Right ventricle myocardium superior (tissue), 1 donor: ENCODE measurements at regions of chr6 and their contacts with region 1.

Region 1: DNA sequence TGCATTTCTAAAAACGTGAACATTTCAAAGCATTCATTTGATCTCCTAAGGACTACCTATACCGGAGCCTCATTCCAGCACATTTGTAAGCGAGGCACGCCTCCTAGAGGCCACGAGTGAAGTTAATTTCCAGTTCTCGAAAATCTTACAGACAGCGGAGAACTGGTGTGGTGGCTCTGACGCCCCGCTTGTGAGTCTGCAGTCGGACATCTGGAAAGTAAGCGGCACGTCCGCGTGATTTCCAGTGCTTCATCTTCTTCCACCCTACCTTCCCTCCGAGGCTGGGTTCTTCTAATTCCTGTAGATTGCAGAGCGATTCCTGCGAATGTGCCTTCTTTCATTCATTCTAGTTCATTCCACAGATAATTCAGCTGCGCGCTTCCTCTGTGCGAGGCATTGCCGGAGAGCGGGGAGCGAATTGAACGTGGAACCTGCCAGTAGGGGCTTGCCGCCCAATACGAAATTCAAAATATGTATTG is 810 bp upstream of the PRIM2 start:
- DNase-seq: peak; percentile 82
- ATAC-seq: peak; percentile 98

Region 2: DNA sequence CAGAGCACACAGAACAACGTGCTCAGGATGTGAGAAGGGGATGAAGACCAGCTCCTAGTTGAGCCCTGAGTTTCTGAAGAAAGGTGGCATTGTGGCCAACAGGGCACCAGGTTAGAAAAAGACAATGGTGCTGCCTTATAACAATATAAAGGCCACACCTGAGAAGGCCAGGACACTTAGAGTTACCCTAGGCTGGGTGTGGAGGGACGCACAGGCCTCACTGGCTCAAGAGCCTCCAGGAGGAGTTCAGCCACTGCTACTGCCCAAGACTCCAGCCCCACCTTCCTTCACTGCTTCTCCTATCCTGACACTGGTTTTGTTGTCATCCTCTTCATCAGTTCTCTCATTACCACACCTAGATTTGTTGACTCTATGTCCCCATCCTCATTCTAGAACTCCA is 416.9 kb before region 1 on chr6:
- intact Hi-C with region 1: loop called (anchors 2 kb)
- DNase-seq: no peak
- ATAC-seq: no peak

Region 3: DNA sequence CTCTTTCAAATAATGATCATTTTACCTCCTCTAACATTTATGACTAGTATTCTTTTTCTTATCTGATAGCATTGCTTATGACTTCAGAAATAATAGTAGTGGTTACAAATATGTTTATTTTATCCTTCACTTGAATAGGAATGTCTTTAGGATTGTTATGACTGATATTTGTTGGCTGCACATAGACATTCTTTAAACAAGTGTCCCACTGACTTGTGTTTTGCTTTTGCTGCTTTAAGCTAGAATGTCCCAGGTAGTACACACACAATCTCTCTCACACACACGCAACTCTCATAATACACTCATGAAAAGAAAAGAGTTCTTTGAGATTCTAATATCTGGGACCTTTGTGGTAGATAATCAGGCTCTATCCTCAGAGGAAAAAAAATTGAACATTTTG is 248.6 kb before region 1 on chr6:
- intact Hi-C with region 1: no loop called
- DNase-seq: no peak
- ATAC-seq: no peak

Region 4: GRCh38 chr6:57158658-57159057 is 158.0 kb before region 1 on chr6:
- intact Hi-C with region 1: no loop called
- DNase-seq: no peak
- ATAC-seq: no peak

Region 5: DNA sequence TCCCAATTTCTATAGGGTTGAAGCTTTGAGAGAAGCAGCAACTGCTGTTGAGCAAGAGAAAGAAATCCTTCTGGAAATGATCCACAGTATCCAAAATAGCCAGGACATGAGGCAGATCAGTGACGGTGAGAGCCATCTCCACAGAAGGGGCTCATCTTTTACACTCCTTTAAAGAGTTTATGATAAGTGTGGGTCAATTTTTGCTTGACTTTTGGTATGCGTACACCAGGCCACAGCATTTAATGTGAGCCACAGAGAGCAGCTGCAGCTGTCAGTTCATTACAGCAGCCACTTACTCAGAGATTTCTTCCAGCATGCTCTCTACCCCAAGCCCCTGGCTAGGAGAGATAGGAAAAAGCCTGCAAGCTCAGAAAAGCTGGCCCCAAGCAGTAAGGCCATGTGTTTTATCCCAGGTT is 134.6 kb before region 1 on chr6:
- intact Hi-C with region 1: loop called (anchors 10 kb)
- DNase-seq: no peak
- ATAC-seq: no peak